B cell (primary cell): ENCODE measurements at regions of chr1 and their contacts with region 1.

Region 1: GRCh38 chr1:199243423-199244061 is 604.7 kb downstream of the PTPRC start:
- DNase-seq: peak; percentile 74
- ATAC-seq: peak; percentile 84
- H3K4me3 ChIP-seq: no peak overlapping the region
- H3K4me3 Mint-ChIP-seq: no peak overlapping the region
- H3K27ac ChIP-seq: no peak overlapping the region
- H3K27ac Mint-ChIP-seq: no peak overlapping the region
- H3K4me1 ChIP-seq: peaks cover 9 to 18% of the 10 kb centered on the region in 2 donors
- H3K4me1 Mint-ChIP-seq: peaks cover 14% of the 10 kb centered on the region
- H3K27me3 ChIP-seq: no peaks in the 10 kb centered on the region
- H3K27me3 Mint-ChIP-seq: no peaks in the 10 kb centered on the region
- CTCF ChIP-seq: peak; percentile 81

Region 2: DNA sequence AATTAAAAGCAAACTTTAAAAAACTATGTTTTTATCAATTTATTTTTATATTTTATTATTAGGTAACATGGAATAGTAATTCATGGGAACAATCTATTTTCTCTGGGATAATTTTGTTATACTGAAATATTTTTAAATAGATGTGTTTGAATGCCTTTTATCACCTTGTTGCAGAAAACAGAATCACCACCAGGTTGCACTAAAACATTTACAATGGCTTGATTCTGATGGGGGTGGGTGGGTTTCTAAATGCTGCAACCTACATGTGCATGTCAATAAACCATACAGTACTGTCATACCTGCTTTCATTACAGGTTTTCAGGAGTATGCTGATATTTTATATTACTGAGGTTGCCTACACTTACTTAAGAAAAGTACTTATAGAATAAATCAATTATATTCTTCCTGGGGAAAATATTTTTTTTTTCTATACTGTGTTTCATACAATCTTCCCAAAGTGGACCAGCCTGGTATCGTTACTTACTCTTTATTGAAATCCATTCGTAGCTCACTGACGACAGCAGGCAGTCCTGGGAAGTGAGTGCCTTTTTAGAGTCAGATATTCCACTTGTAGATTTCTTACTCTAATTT is 471.9 kb before region 1 on chr1:
- CTCF ChIA-PET with region 1: interaction called, 7 read pairs
- POLR2A ChIA-PET with region 1: no interaction called
- intact Hi-C with region 1: loop called (anchors 5 kb)
- DNase-seq: peak; percentile 50
- ATAC-seq: no peak
- H3K4me3 ChIP-seq: no peak overlapping the region
- H3K4me3 Mint-ChIP-seq: no peak overlapping the region
- H3K27ac ChIP-seq: no peak overlapping the region
- H3K27ac Mint-ChIP-seq: no peak overlapping the region
- H3K4me1 ChIP-seq: no peaks in the 10 kb centered on the region
- H3K4me1 Mint-ChIP-seq: no peaks in the 10 kb centered on the region
- H3K27me3 ChIP-seq: no peaks in the 10 kb centered on the region
- H3K27me3 Mint-ChIP-seq: no peaks in the 10 kb centered on the region
- CTCF ChIP-seq: peak; percentile 71

Region 3: DNA sequence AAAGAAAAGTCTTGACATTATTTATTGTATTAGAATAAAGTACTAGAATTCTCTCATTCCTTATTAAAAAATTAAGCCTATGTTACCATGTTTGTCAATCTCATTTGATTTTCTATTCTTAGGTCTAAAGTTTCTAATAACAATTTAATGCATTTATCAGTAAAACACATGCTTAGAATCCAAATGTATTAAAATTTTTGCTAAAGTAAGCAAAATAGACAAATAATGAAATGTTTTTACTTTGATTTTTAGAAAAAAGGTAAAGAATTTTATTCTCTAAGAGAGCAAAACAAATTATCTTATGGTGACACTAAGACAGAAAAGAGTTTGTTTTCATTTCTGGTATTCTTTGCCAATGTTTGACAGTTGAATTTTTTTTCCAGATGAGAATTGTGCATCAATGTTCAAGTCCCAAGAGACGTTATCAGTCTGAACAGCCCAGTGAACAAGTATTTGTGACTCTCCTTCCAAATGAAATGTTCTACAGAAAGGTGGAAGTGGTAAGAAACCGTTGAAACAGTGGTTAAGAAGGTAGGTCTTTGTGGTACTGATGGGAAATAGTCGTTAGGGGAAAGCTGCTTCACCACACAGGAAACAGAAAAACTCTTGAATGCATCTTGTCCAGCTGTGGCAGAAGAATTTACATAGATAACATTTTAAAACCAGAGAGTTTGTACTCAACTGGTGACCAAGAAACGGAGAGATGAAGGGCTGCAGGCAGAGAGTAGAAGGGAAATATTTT is 202.2 kb before region 1 on chr1:
- CTCF ChIA-PET with region 1: no interaction called
- POLR2A ChIA-PET with region 1: no interaction called
- intact Hi-C with region 1: no loop called
- DNase-seq: peak; percentile 53
- ATAC-seq: peak; percentile 33
- H3K4me3 ChIP-seq: no peak overlapping the region
- H3K4me3 Mint-ChIP-seq: peak overlapping the region; percentile 3
- H3K27ac ChIP-seq: no peak overlapping the region
- H3K27ac Mint-ChIP-seq: no peak overlapping the region
- H3K4me1 ChIP-seq: peaks cover 7 to 22% of the 10 kb centered on the region in 2 donors
- H3K4me1 Mint-ChIP-seq: peaks cover 20% of the 10 kb centered on the region
- H3K27me3 ChIP-seq: peaks cover 0 to 29% (median 4%) of the 10 kb centered on the region in 4 experiments
- H3K27me3 Mint-ChIP-seq: peaks cover 22% of the 10 kb centered on the region
- CTCF ChIP-seq: no peak

Region 4: GRCh38 chr1:199272643-199273086 is 29.1 kb after region 1 on chr1:
- CTCF ChIA-PET with region 1: no interaction called
- POLR2A ChIA-PET with region 1: no interaction called
- intact Hi-C with region 1: no loop called
- DNase-seq: no peak
- ATAC-seq: no peak
- H3K4me3 ChIP-seq: no peak overlapping the region
- H3K4me3 Mint-ChIP-seq: no peak overlapping the region
- H3K27ac ChIP-seq: no peak overlapping the region
- H3K27ac Mint-ChIP-seq: no peak overlapping the region
- H3K4me1 ChIP-seq: no peaks in the 10 kb centered on the region
- H3K4me1 Mint-ChIP-seq: no peaks in the 10 kb centered on the region
- H3K27me3 ChIP-seq: no peaks in the 10 kb centered on the region
- H3K27me3 Mint-ChIP-seq: no peaks in the 10 kb centered on the region
- CTCF ChIP-seq: no peak